ENCODE measurements at regions of chr16 and their contacts with region 1.

Region 1: DNA sequence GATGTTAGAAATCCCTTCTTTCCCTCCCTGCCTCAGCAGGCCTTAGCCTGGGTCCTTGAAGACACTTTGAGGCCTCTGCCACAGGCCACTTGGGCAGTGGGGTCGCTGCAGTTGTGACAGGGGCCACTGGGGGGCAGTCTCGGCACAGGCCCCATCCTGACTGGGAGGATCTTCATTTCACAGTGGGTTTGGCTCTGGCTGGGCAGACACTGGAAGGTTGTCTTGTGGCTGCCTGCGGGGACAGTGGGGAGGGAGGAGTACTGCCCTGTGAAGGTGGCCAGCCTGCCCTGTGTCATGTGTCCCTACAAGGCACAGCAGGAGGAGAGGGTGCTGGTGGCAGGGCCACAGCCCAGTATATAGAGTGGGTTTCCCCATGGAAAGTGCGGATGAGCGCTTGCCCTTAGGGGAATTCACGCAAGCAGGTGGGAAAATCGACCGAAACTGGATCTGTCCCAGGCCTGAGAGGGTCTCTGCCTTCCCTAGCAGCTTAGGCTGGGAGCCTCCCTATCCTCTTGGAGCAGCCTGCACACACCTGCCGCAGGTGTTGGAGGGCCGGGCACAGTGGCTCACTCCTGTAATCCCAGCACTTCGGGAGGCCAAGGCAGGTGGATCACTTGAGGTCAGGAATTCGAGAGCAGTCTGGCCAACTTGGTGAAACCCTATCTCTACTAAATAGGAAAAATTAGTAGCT is 28.8 kb downstream of the GINS2 start:
- DNase-seq: peak; percentile 55
- H3K4me3 Mint-ChIP-seq: no peak overlapping the region
- H3K27ac Mint-ChIP-seq: no peak overlapping the region
- H3K4me1 Mint-ChIP-seq: no peaks in the 10 kb centered on the region
- H3K27me3 Mint-ChIP-seq: no peaks in the 10 kb centered on the region
- CTCF ChIP-seq: peak; percentile 82

Region 2: DNA sequence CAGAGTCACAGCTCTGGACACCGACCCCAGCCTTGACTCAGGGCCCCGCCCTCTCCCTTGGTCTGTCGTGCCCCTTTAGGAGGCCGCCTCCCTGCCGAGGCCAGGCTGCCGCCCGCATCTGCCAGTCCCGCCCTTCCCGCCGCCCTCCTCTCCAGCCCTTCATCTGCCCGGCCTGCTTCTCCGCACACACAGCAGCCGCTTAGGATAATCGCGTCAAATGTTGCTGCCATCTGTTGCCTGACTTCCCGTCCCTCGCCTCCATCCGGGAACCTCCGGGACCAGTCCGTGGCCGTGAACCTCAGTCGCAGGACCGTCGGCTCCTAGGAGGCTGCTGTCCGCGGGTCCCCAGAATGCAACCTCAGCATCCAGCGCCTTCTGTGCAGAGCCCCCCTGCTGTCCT is 34.9 kb before region 1 on chr16:
- CTCF ChIA-PET with region 1: no interaction called
- POLR2A ChIA-PET with region 1: no interaction called
- intact Hi-C with region 1: no loop called
- DNase-seq: no peak
- H3K4me3 Mint-ChIP-seq: no peak overlapping the region
- H3K27ac Mint-ChIP-seq: no peak overlapping the region
- H3K4me1 Mint-ChIP-seq: no peaks in the 10 kb centered on the region
- H3K27me3 Mint-ChIP-seq: no peaks in the 10 kb centered on the region
- CTCF ChIP-seq: no peak

Region 3: GRCh38 chr16:85635545-85636146 is 24.3 kb before region 1 on chr16:
- CTCF ChIA-PET with region 1: interaction called, 10 read pairs
- POLR2A ChIA-PET with region 1: no interaction called
- intact Hi-C with region 1: no loop called
- DNase-seq: peak; percentile 71
- H3K4me3 Mint-ChIP-seq: no peak overlapping the region
- H3K27ac Mint-ChIP-seq: no peak overlapping the region
- H3K4me1 Mint-ChIP-seq: peaks cover 4% of the 10 kb centered on the region
- H3K27me3 Mint-ChIP-seq: no peaks in the 10 kb centered on the region
- CTCF ChIP-seq: no peak

Measured in MCF 10A (cell line).